ENCODE measurements at regions of chr1 and their contacts with region 1.

Region 1: GRCh38 chr1:85692730-85693314 is 15.4 kb downstream of the ZNHIT6 start:
- DNase-seq: peak in 1 of 2 experiments; percentile 45
- ATAC-seq: peak; percentile 43 to 61; a peak in 4 of 6 replicates
- H3K4me3 ChIP-seq: no peak overlapping the region
- H3K27ac ChIP-seq: peak overlapping the region; percentile 52 to 65
- H3K4me1 ChIP-seq: peaks cover 22% of the 10 kb centered on the region; the same call in 2 of the 3 replicates
- CTCF ChIP-seq: peak; percentile 64
- EP300 ChIP-seq: no peak
- POLR2A ChIP-seq: no peak
- RAD21 ChIP-seq: peak; percentile 65 to 82

Region 2: GRCh38 chr1:85576642-85577418 is 116.0 kb before region 1 on chr1:
- CTCF ChIA-PET with region 1: interaction called, 17 read pairs
- POLR2A ChIA-PET with region 1: interaction called, 7 read pairs
- DNase-seq: peak; percentile 43 to 84
- ATAC-seq: peak; percentile 55 to 64
- H3K4me3 ChIP-seq: peak overlapping the region; percentile 78
- H3K27ac ChIP-seq: peak overlapping the region; percentile 99 to 100
- H3K4me1 ChIP-seq: peaks cover 43% of the 10 kb centered on the region
- CTCF ChIP-seq: peak; percentile 60
- EP300 ChIP-seq: no peak
- POLR2A ChIP-seq: peak; percentile 34; the same call in 1 of the 2 replicates
- RAD21 ChIP-seq: peak; percentile 10 to 50; a peak in 2 of 5 replicates

Region 3: GRCh38 chr1:85599076-85599491 is 93.7 kb before region 1 on chr1:
- CTCF ChIA-PET with region 1: interaction called, 11 read pairs
- POLR2A ChIA-PET with region 1: no interaction called
- DNase-seq: no peak
- ATAC-seq: peak; percentile 45 to 70; a peak in 4 of 6 replicates
- H3K4me3 ChIP-seq: no peak overlapping the region
- H3K27ac ChIP-seq: peak overlapping the region in 1 of 2 experiments; percentile 37; a peak in 1 of 6 replicates
- H3K4me1 ChIP-seq: no peaks in the 10 kb centered on the region
- CTCF ChIP-seq: no peak
- EP300 ChIP-seq: no peak
- POLR2A ChIP-seq: no peak
- RAD21 ChIP-seq: no peak

Region 4: DNA sequence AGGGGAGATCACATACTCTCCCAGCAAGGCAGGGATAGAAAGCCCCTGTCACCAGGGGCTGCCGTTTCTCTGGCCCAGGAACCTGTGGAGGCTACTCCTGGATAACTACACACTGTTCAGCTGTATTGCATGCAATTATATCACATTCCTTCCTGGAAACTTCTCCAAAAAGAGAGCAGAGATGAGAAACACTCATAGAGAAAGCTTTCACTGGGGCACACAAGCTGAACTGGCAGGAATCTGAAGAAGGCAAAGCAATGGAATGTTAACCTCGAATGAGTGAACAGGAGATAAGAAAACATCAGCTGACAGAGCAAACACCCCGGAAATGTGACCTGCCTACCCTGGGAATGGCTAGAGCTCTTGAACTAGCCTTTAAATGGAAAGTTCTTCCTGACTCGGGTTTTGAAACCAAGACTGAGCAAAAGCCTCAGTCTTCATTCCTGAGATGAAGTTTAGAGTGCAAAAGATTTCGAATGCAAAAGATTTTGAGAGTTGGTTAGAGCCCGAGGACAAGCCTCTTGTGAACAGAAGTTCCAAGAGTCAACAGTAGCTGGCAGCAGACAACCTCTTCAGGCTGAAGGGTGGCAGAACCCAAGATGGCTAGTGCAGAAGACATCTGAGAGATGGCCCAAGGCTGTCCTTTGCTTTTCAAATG is 80.0 kb before region 1 on chr1:
- CTCF ChIA-PET with region 1: interaction called, 20 read pairs
- POLR2A ChIA-PET with region 1: no interaction called
- DNase-seq: peak; percentile 35 to 73
- ATAC-seq: peak; percentile 79 to 85
- H3K4me3 ChIP-seq: no peak overlapping the region
- H3K27ac ChIP-seq: peak overlapping the region; percentile 79 to 86
- H3K4me1 ChIP-seq: peaks cover 55% of the 10 kb centered on the region
- CTCF ChIP-seq: peak; percentile 55
- EP300 ChIP-seq: peak in 1 of 2 experiments; percentile 16; a peak in 1 of 5 replicates
- POLR2A ChIP-seq: no peak
- RAD21 ChIP-seq: peak; percentile 72 to 77

Region 5: DNA sequence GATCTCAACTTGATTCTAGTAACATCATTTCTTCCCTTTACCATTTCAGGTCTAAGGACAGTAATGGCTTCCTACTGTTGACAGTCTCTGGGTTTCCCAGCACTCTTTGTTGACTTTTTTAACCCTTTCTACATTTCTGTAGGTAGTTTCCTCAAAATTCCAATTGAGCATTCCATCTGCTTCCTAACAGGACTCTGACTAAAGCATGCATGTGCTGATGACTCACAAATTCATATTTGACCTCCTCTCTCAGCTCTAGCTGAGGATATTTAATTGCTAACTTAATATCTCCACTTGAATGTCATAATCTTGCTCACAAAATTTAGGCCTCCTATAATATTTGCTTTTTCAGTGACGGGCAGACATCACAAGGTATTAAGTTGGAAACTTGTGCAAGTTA is 108.7 kb after region 1 on chr1:
- CTCF ChIA-PET with region 1: no interaction called
- POLR2A ChIA-PET with region 1: no interaction called
- DNase-seq: peak in 1 of 2 experiments; percentile 4
- ATAC-seq: no peak
- H3K4me3 ChIP-seq: no peak overlapping the region
- H3K27ac ChIP-seq: no peak overlapping the region
- H3K4me1 ChIP-seq: no peaks in the 10 kb centered on the region
- CTCF ChIP-seq: no peak
- EP300 ChIP-seq: no peak
- POLR2A ChIP-seq: no peak
- RAD21 ChIP-seq: no peak